ENCODE measurements at regions of chr4 and their contacts with region 1.

Region 1: DNA sequence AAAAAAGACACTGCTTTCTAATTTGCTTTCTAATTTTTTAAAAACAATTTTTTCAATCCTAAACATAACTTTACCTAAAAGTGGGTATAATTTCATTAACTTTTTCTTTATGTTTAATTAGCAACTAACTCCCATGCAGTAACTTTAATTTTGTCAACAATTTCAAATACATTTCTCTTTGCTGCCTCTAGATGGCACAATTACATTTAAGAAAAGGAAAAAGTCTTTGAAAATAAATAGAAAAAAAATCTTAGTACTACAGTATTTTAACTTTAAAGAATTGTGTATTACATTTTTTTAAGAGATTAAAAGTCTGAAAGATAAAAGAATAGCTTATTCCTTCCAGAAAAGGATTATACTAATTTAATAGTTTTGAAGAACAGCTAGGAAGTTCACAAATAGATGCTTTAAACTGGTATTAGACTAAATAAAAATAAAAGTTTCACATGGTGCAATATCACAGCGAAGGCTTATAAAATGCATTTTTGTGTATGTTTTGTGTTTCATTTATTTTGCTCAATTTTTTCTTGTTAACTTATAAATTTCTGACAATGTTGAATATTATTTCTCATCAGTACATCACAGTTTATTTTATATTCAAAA is 105.1 kb downstream of the ADGRA3 start:
- DNase-seq: no peak
- H3K4me3 ChIP-seq: no peak overlapping the region
- H3K27ac ChIP-seq: no peak overlapping the region
- H3K27me3 ChIP-seq: no peaks in the 10 kb centered on the region
- CTCF ChIP-seq: peak; percentile 56

Region 2: DNA sequence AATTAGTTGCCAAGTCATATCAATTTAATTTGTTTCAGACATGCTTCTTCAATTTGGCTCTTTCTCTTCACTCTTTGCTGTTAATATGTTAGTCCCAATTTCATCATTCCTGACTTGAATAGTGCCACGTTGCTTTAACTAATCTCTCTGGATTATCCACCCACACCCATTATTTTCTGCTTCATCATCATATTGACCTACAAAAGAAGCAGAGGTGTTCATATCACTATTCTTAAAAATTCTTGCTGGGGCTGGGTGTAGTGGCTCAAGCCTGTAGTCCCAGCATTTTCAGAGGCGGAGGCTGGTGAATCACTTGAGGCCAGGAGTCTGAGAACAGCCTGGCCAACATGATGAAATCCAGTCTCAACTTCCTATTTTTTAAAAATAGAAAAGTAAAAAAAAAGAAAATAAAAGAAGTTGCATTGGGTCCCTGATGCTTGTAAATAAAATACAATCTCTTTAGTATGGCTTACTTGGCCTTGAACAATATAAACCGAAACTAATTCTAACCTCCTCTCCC is 396.5 kb before region 1 on chr4:
- CTCF ChIA-PET with region 1: no interaction called
- POLR2A ChIA-PET with region 1: no interaction called
- DNase-seq: no peak
- H3K4me3 ChIP-seq: no peak overlapping the region
- H3K27ac ChIP-seq: no peak overlapping the region
- H3K27me3 ChIP-seq: no peaks in the 10 kb centered on the region
- CTCF ChIP-seq: no peak

Region 3: DNA sequence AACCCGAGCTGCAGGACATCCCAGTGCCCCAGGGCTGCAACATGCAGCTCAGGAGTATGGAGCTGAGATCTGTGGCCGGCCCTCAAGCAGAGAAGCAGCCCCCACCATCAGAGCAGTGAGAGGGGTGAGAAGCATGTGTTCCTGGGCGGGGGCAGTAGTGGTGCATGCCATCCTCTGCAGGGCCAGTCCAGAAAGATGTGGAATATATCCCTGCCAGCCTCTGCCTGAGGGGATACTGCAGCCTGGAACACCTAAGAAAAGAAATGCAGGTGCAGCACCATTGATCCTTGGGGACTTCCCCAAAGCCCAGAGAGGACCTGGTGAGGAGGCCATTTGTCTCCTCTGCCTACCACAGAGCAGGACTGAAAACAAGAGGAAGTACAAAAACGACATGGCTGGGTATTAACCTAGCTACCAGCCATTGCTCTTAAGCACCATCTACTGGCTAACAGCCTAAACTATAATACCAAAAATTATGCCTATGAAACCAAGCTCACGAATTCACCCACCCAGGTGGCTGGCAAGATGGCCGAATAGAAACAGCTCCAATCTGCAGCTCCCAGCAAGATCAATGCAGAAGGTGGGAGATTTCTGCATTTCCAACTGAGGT is 53.7 kb before region 1 on chr4:
- CTCF ChIA-PET with region 1: no interaction called
- POLR2A ChIA-PET with region 1: no interaction called
- DNase-seq: no peak
- H3K4me3 ChIP-seq: no peak overlapping the region
- H3K27ac ChIP-seq: no peak overlapping the region
- H3K27me3 ChIP-seq: no peaks in the 10 kb centered on the region
- CTCF ChIP-seq: peak; percentile 45

Region 4: GRCh38 chr4:22434895-22435294 is 24.1 kb after region 1 on chr4:
- CTCF ChIA-PET with region 1: interaction called, 12 read pairs
- POLR2A ChIA-PET with region 1: no interaction called
- DNase-seq: peak; percentile 34
- H3K4me3 ChIP-seq: no peak overlapping the region
- H3K27ac ChIP-seq: no peak overlapping the region
- H3K27me3 ChIP-seq: no peaks in the 10 kb centered on the region
- CTCF ChIP-seq: peak; percentile 71

Region 5: DNA sequence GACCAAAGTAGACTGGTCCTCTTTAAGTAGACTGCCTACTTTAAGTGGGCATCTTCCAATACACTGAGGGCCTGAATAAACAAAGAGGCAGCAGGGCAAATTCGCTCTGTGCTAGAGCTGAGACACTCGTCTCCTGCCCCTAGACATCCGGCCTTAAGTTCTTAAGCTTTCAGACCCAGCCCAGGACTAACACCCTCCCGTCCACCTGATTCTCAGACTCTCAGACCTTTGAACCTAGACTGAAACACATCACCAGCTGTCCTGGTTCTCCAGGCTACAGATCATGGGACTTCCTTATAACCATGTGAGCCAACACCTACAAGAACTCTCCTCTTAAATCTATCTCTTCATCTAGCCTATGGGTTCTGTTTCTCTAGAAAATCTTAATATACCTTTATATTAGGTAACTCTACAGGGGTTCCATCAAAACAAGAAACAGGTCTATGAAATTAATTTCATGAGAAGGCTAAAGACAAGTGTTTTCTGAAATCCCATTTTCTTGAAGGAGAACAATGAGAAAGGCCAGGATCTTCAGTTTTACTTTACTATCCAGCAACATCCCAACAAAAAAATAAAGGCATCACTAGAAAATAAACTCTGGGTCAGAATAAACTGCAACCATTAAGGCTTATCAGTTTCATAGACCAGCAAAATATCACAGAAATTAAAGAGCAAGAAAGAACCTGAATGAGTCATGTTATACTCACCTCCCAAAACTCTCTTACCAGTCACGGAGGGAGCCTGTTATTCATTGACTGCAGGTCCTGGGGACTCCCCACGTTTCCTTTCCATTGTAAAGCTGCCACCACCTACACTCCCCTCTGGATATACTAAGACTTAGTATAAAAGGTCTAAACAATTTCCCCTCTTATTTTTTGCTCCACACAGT is 90.3 kb after region 1 on chr4:
- CTCF ChIA-PET with region 1: interaction called, 12 read pairs
- POLR2A ChIA-PET with region 1: no interaction called
- DNase-seq: no peak
- H3K4me3 ChIP-seq: no peak overlapping the region
- H3K27ac ChIP-seq: no peak overlapping the region
- H3K27me3 ChIP-seq: no peaks in the 10 kb centered on the region
- CTCF ChIP-seq: no peak

Region 6: GRCh38 chr4:22607382-22607781 is 196.6 kb after region 1 on chr4:
- CTCF ChIA-PET with region 1: interaction called, 83 read pairs
- POLR2A ChIA-PET with region 1: no interaction called
- DNase-seq: peak; percentile 23
- H3K4me3 ChIP-seq: no peak overlapping the region
- H3K27ac ChIP-seq: no peak overlapping the region
- H3K27me3 ChIP-seq: no peaks in the 10 kb centered on the region
- CTCF ChIP-seq: peak; percentile 69

Region 7: GRCh38 chr4:22678940-22679854 is 268.5 kb after region 1 on chr4:
- CTCF ChIA-PET with region 1: interaction called, 15 read pairs
- POLR2A ChIA-PET with region 1: no interaction called
- DNase-seq: no peak
- H3K4me3 ChIP-seq: no peak overlapping the region
- H3K27ac ChIP-seq: no peak overlapping the region
- H3K27me3 ChIP-seq: peaks cover 2% of the 10 kb centered on the region
- CTCF ChIP-seq: no peak

Region 8: GRCh38 chr4:22692736-22693135 is 282.0 kb after region 1 on chr4 and contains the start of gene GBA3:
- CTCF ChIA-PET with region 1: interaction called, 19 read pairs
- POLR2A ChIA-PET with region 1: no interaction called
- DNase-seq: no peak
- H3K4me3 ChIP-seq: no peak within 1 kb of the TSS
- H3K27ac ChIP-seq: no peak within 1 kb of the TSS
- H3K27me3 ChIP-seq: no peaks in the 10 kb centered on the region
- CTCF ChIP-seq: no peak
- polyA plus RNA-seq, gene GBA3: not detected in 2 replicates